ENCODE measurements at regions of chr6 and their contacts with region 1.

Region 1: DNA sequence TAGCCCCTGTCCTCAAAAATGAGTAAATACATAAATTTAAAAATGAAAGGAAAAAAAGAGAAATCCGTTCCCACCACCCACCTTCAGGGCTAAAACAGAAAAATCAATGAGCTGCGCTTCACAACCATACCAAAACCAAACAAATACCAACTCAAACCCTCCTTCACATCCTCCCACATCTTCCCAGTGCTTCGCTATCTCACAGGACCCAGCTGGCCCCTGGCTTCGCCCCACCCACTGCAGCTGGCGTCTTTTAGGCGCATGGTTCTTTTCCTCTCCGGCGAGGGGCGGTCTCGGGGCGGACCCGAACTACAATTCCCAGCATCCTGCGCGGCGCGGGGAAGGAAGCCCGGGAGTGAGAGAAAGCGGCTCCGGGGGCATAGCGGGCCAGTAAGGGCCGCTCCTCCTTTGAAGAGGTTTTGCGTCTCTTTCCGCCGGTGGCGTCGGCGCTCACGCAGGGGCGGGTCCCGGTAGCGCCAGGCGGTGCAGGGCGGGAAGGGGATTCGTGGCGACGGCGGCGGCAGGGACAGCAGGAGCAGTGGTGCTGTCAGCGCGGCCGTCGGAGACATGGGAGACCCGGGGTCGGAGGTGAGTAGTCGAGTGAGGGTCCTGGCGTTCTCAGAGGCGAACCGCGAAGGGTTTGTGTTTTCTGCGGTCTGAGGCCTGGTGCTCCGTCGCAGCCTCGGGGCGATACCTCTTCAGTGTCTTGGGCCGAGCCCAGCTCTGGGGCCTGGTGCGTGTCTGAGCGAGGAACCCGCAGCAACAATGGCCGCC is at the start of gene ZNF451:
- DNase-seq: peak; percentile 92 to 99 (median 95)
- ATAC-seq: peak; percentile 88
- H3K4me3 ChIP-seq: peak within 1 kb of the TSS; percentile 52
- H3K27ac ChIP-seq: peak within 1 kb of the TSS; percentile 85
- H3K4me1 ChIP-seq: peaks cover 9 to 25% of the 10 kb centered on the region in 2 experiments
- H3K27me3 ChIP-seq: no peaks in the 10 kb centered on the region
- CTCF ChIP-seq: peak in 1 of 3 experiments; percentile 8; a peak in 1 of 6 replicates
- EP300 ChIP-seq: peak; percentile 86
- POLR2A ChIP-seq: peak; percentile 93
- RAD21 ChIP-seq: no peak
- polyA plus RNA-seq, gene ZNF451: 16.1 to 17.3 TPM

Region 2: DNA sequence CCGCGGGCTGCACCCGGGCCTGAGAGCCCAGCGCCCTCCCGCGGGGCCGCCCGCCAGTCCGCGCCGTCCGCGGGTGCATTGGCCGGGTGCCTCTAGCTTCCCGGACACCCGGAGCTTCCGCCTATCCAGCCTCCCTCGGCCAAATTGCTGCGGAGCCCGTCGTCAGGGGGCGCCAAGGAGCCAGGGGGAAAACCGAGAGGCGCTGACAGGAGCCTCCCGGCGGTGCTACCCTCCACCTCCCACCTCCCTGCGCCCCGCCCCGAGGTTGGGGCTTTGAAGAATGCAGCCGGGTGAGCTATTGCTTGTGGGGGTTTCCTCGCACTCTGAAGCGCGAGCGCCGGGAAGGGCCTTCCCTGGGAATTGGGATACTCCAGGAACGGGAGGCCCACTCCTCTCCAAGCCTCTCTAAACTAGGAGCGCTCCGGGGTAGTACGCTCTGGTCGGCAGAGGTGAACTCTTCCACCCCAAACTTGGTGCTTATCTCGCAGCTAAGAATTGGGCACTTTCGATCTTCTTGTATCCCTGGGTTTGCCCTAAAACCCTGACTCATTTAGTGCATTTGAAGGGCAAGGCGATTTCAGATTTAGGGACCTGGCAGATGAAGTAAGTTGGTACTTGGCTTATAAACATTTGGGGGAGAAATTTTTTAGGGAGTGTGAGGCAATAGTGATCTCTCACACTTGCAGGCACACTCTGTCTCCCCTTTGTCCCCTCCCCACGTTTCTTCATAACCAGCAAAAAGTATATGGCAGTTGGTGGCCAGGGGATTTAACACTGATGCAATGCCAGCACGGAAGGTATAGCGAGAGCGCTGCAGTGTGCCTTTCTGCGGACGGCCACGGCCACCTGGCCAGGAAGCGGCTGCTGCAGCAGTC is 134.5 kb before region 1 on chr6:
- CTCF ChIA-PET with region 1: no interaction called
- POLR2A ChIA-PET with region 1: interaction called, 4 read pairs
- in situ Hi-C with region 1: no loop called
- intact Hi-C with region 1: loop called (anchors 5 kb)
- DNase-seq: peak; percentile 86 to 95 (median 87)
- ATAC-seq: peak; percentile 90
- H3K4me3 ChIP-seq: peak overlapping the region; percentile 69
- H3K27ac ChIP-seq: peak overlapping the region; percentile 72
- H3K4me1 ChIP-seq: peaks cover 13 to 20% of the 10 kb centered on the region in 2 experiments; a peak in 4 of 5 replicates
- H3K27me3 ChIP-seq: no peaks in the 10 kb centered on the region
- CTCF ChIP-seq: peak; percentile 87 to 96 (median 96)
- EP300 ChIP-seq: no peak; the same call in 1 of the 2 replicates
- POLR2A ChIP-seq: peak; percentile 51; the same call in 1 of the 2 replicates
- RAD21 ChIP-seq: peak; percentile 80 to 82

Region 3: GRCh38 chr6:57048577-57048976 is 41.3 kb before region 1 on chr6:
- CTCF ChIA-PET with region 1: no interaction called
- POLR2A ChIA-PET with region 1: no interaction called
- in situ Hi-C with region 1: no loop called
- intact Hi-C with region 1: loop called (anchors 1 kb)
- DNase-seq: peak in 1 of 4 experiments; percentile 34
- ATAC-seq: no peak
- H3K4me3 ChIP-seq: peak overlapping the region; percentile 44
- H3K27ac ChIP-seq: peak overlapping the region; percentile 71
- H3K4me1 ChIP-seq: peaks cover 6 to 10% of the 10 kb centered on the region in 2 experiments; a peak in 4 of 5 replicates
- H3K27me3 ChIP-seq: no peaks in the 10 kb centered on the region
- CTCF ChIP-seq: no peak
- EP300 ChIP-seq: no peak
- POLR2A ChIP-seq: no peak
- RAD21 ChIP-seq: no peak

Region 4: DNA sequence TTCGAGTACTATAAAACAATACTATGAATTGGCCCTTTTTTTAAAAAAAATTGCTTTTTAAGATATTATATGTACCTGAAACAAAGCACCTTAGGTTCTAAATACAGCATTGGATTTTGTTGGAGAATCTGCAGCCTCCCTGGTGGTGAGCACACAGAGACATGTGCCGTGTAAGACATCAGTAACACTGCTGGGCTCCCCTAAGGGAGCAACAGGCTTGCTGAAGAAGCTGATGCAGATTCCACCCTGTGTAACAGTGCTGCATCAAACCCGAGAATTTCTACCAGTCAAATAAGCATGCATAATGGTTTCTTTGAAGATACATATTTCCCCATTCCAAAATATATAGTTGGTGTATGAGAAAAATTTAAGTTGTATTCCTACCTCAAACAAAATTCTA is 26.0 kb before region 1 on chr6:
- CTCF ChIA-PET with region 1: no interaction called
- POLR2A ChIA-PET with region 1: interaction called, 13 read pairs
- in situ Hi-C with region 1: no loop called
- intact Hi-C with region 1: no loop called
- DNase-seq: no peak
- ATAC-seq: peak; percentile 53; the same call in 2 of the 3 replicates
- H3K4me3 ChIP-seq: no peak overlapping the region
- H3K27ac ChIP-seq: no peak overlapping the region
- H3K4me1 ChIP-seq: peaks cover 0 to 3% of the 10 kb centered on the region in 2 experiments; a peak in 2 of 5 replicates
- H3K27me3 ChIP-seq: no peaks in the 10 kb centered on the region
- CTCF ChIP-seq: no peak
- EP300 ChIP-seq: no peak
- POLR2A ChIP-seq: no peak
- RAD21 ChIP-seq: no peak

Region 5: GRCh38 chr6:57104336-57104735 is 14.5 kb after region 1 on chr6:
- CTCF ChIA-PET with region 1: no interaction called
- POLR2A ChIA-PET with region 1: interaction called, 24 read pairs
- in situ Hi-C with region 1: no loop called
- intact Hi-C with region 1: no loop called
- DNase-seq: no peak
- ATAC-seq: no peak
- H3K4me3 ChIP-seq: no peak overlapping the region
- H3K27ac ChIP-seq: no peak overlapping the region
- H3K4me1 ChIP-seq: no peaks in the 10 kb centered on the region; a peak in 2 of 5 replicates
- H3K27me3 ChIP-seq: no peaks in the 10 kb centered on the region
- CTCF ChIP-seq: no peak
- EP300 ChIP-seq: no peak
- POLR2A ChIP-seq: no peak
- RAD21 ChIP-seq: no peak

Region 6: GRCh38 chr6:57216235-57217101 is 126.6 kb after region 1 on chr6:
- CTCF ChIA-PET with region 1: no interaction called
- POLR2A ChIA-PET with region 1: no interaction called
- in situ Hi-C with region 1: no loop called
- intact Hi-C with region 1: loop called (anchors 5 kb)
- DNase-seq: peak in 2 of 4 experiments; percentile 19 to 69
- ATAC-seq: peak; percentile 31
- H3K4me3 ChIP-seq: peak overlapping the region; percentile 3; the same call in 1 of the 2 replicates
- H3K27ac ChIP-seq: peak overlapping the region; percentile 73
- H3K4me1 ChIP-seq: peaks cover 4 to 16% of the 10 kb centered on the region in 2 experiments
- H3K27me3 ChIP-seq: no peaks in the 10 kb centered on the region
- CTCF ChIP-seq: 0 out of 6 replicates have a peak, but pooled peaks of 2 of the 3 experiments have one; percentile 3 to 27
- EP300 ChIP-seq: 0 out of 2 replicates have a peak, but pooled peaks have one; percentile 12
- POLR2A ChIP-seq: no peak
- RAD21 ChIP-seq: no peak

Region 7: GRCh38 chr6:57432919-57433684 is 343.2 kb after region 1 on chr6:
- CTCF ChIA-PET with region 1: no interaction called
- POLR2A ChIA-PET with region 1: no interaction called
- in situ Hi-C with region 1: no loop called
- intact Hi-C with region 1: no loop called
- DNase-seq: no peak
- ATAC-seq: no peak
- H3K4me3 ChIP-seq: no peak overlapping the region
- H3K27ac ChIP-seq: no peak overlapping the region
- H3K4me1 ChIP-seq: no peaks in the 10 kb centered on the region
- H3K27me3 ChIP-seq: no peaks in the 10 kb centered on the region
- CTCF ChIP-seq: no peak
- EP300 ChIP-seq: no peak
- POLR2A ChIP-seq: no peak
- RAD21 ChIP-seq: no peak